ENCODE measurements at regions of chr13 and their contacts with region 1.

Region 1: GRCh38 chr13:50529154-50529882 is 314.2 kb downstream of the DLEU7 start:
- DNase-seq: peak; percentile 92
- H3K4me3 Mint-ChIP-seq: peak overlapping the region; percentile 68
- H3K27ac Mint-ChIP-seq: peak overlapping the region; percentile 98
- H3K4me1 Mint-ChIP-seq: peaks cover 37% of the 10 kb centered on the region
- H3K27me3 Mint-ChIP-seq: no peaks in the 10 kb centered on the region
- CTCF ChIP-seq: no peak

Region 2: DNA sequence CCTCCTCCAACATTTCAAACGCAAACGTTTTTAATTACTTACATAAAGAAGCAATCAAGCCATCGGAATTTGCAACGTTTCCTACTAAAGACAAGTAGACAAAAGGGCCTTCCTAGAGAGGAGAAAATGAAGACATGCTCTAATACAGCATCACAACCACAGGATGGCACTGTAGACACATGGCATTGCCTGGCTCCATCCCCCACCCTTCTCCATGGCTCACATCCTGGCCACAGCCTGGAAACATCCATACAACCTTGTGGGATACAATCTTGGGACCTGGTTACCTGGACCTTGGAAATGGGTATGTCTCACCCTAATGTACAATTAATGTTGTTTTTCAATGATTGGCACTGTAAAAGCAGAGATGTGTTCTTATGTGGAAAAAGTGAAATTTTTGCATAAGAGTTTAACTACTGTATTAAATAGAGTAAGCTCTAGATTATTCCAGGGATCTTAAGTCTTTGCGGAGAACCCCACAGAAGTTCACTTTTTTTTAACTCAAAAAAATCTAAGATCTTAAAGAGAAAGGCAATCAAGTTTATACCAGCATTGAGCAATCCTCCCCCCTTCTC is 859.5 kb before region 1 on chr13:
- CTCF ChIA-PET with region 1: no interaction called
- POLR2A ChIA-PET with region 1: no interaction called
- intact Hi-C with region 1: loop called (anchors 2 kb)
- DNase-seq: peak; percentile 73
- H3K4me3 Mint-ChIP-seq: no peak overlapping the region
- H3K27ac Mint-ChIP-seq: no peak overlapping the region
- H3K4me1 Mint-ChIP-seq: peaks cover 30% of the 10 kb centered on the region
- H3K27me3 Mint-ChIP-seq: no peaks in the 10 kb centered on the region
- CTCF ChIP-seq: peak; percentile 73

Region 3: GRCh38 chr13:49996951-49997895 is 532.1 kb before region 1 on chr13 and contains the start of gene TRIM13:
- CTCF ChIA-PET with region 1: interaction called, 6 read pairs
- POLR2A ChIA-PET with region 1: interaction called, 12 read pairs
- intact Hi-C with region 1: loop called (anchors 2 kb)
- DNase-seq: peak; percentile 91
- H3K4me3 Mint-ChIP-seq: peak within 1 kb of the TSS; percentile 89
- H3K27ac Mint-ChIP-seq: peak within 1 kb of the TSS; percentile 80
- H3K4me1 Mint-ChIP-seq: peaks cover 16% of the 10 kb centered on the region
- H3K27me3 Mint-ChIP-seq: no peaks in the 10 kb centered on the region
- CTCF ChIP-seq: peak; percentile 79
- total RNA-seq, gene TRIM13: 17.5 and 19.0 TPM in 2 replicates

Region 4: DNA sequence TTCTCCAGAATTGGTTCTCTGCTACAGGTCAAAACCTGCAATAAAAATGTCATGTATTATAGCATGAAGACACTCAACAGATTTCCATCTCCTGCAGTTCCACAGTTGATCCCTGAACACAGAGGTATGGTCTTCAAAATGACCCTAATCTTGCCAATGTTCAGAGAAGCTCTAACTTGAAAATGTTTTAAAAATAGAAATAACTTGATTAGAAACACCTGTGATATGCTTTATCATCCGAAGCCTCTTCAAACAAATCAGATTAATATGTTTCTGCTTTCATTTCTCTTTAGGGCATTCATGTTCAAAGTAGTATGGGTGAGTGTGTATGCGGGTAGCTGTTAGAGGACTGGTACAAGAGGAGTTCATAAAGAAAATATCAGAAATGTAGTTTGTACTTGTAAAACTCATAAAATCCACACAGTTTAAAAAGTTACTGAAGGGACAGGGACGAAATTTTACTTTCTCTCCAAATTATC is 453.7 kb before region 1 on chr13:
- CTCF ChIA-PET with region 1: interaction called, 4 read pairs
- POLR2A ChIA-PET with region 1: interaction called, 142 read pairs
- intact Hi-C with region 1: no loop called
- DNase-seq: peak; percentile 47
- H3K4me3 Mint-ChIP-seq: peak overlapping the region; percentile 97
- H3K27ac Mint-ChIP-seq: peak overlapping the region; percentile 99
- H3K4me1 Mint-ChIP-seq: peaks cover 10% of the 10 kb centered on the region
- H3K27me3 Mint-ChIP-seq: no peaks in the 10 kb centered on the region
- CTCF ChIP-seq: no peak

Region 5: GRCh38 chr13:50170447-50171037 is 358.8 kb before region 1 on chr13:
- CTCF ChIA-PET with region 1: interaction called, 3 read pairs
- POLR2A ChIA-PET with region 1: interaction called, 4 read pairs
- intact Hi-C with region 1: loop called (anchors 1 kb)
- DNase-seq: peak; percentile 42
- H3K4me3 Mint-ChIP-seq: no peak overlapping the region
- H3K27ac Mint-ChIP-seq: no peak overlapping the region
- H3K4me1 Mint-ChIP-seq: no peaks in the 10 kb centered on the region
- H3K27me3 Mint-ChIP-seq: no peaks in the 10 kb centered on the region
- CTCF ChIP-seq: peak; percentile 36

Region 6: DNA sequence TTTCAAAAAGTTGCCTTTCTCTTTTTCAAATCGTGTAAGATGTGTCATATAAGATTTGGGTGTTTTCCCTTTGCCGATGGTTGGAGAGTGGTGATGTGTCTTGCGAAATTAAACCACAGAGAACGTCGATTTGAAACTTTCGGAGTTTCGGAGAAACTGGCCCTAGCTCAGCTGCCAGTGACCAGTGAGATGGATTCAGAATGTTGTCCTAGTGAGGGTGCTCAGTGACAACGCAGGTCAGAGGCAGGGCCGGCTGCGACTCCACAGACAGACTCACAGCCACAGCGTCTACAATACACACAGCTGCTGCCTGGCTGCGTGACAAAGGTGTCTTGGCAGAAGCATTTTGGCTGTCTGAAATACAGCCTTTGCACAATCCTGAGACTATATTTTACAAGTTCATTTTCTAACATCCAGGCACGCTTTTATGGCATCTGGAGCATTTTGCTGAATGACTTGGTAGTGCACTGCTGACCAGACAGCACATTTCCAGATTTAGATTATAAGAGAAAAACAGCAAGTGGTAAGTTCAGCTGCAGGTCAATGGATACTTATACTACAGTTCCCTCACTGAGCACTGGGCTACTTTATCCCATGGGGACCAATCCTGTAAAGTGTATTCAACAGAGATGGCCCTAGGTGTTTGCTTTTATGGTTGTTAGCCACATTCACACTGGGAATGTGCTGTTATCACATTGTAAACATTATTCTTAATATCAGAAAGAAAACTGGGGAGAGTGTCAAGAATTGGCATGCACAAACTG is 306.6 kb before region 1 on chr13:
- CTCF ChIA-PET with region 1: interaction called, 4 read pairs
- POLR2A ChIA-PET with region 1: interaction called, 45 read pairs
- intact Hi-C with region 1: no loop called
- DNase-seq: peak; percentile 95
- H3K4me3 Mint-ChIP-seq: peak overlapping the region; percentile 72
- H3K27ac Mint-ChIP-seq: peak overlapping the region; percentile 98
- H3K4me1 Mint-ChIP-seq: peaks cover 40% of the 10 kb centered on the region
- H3K27me3 Mint-ChIP-seq: no peaks in the 10 kb centered on the region
- CTCF ChIP-seq: no peak

Region 7: GRCh38 chr13:50801087-50801931 is 272.0 kb after region 1 on chr13:
- CTCF ChIA-PET with region 1: interaction called, 13 read pairs
- POLR2A ChIA-PET with region 1: interaction called, 4 read pairs
- intact Hi-C with region 1: loop called (anchors 1 kb)
- DNase-seq: peak; percentile 82
- H3K4me3 Mint-ChIP-seq: no peak overlapping the region
- H3K27ac Mint-ChIP-seq: no peak overlapping the region
- H3K4me1 Mint-ChIP-seq: peaks cover 5% of the 10 kb centered on the region
- H3K27me3 Mint-ChIP-seq: no peaks in the 10 kb centered on the region
- CTCF ChIP-seq: peak; percentile 85